Right ventricle myocardium inferior (tissue), 1 donor: ENCODE measurements at regions of chr20 and their contacts with region 1.

Region 1: GRCh38 chr20:63627129-63627750 is 339 bp upstream of the GMEB2 start:
- DNase-seq: peak; percentile 99
- ATAC-seq: peak; percentile 94

Region 2: DNA sequence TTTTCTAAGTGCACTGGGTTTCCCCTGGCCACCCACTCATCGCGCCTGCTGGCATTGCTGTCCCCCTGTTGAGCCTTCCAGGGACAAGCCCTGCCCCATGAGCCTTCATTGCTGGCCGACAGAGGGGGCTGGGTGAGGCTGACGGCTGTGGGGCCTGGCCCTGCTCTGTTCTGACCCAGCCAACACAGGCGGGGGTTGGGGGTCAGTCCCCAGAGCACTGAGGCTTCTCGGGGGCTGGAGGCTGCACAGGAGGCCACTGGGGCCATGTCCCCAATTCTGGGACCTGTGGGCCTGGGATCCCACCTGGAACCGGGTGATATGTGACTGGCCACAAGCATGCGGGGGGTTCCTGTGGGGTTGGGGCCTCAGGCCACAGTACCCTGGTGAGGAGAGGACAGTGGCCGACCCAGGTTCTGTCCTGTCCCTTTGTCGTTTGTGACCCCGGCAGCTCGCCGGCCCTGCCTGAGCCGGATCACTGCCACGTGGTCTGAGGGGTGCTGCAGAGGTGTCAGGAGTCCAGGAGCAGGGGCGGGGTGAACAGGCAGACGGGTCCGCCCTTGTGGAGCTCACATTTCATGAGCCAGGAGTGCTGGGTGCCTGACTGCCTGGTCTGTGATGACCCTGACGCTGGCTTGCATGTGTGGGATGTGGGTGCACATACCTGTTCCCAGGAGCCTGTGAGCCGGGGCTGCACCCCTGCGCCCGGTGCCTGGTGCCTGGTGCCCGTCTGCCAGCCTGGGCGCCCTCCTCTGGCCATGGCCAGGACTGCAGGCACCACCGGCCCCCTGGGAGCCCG is 336.4 kb before region 1 on chr20:
- intact Hi-C with region 1: no loop called
- DNase-seq: peak; percentile 64
- ATAC-seq: peak; percentile 33

Region 3: GRCh38 chr20:63657937-63658748 is 30.9 kb after region 1 on chr20 and contains the start of gene RTEL1:
- intact Hi-C with region 1: loop called (anchors 1 kb)
- DNase-seq: peak; percentile 97
- ATAC-seq: peak; percentile 95
- total RNA-seq, gene RTEL1: 9.0 TPM